Ascending aorta (tissue), 2 donors: ENCODE measurements at regions of chr1 and their contacts with region 1.

Region 1: GRCh38 chr1:35202048-35202719 is 9.2 kb upstream of the SFPQ start:
- DNase-seq: peak in 1 of 2 donors; percentile 80
- H3K4me3 ChIP-seq: peak overlapping the region in 1 of 2 donors; percentile 25
- H3K27ac ChIP-seq: no peak overlapping the region
- H3K4me1 ChIP-seq: no peaks in the 10 kb centered on the region
- H3K27me3 ChIP-seq: no peaks in the 10 kb centered on the region
- CTCF ChIP-seq: peak; percentile 60 to 84 (median 83)

Region 2: GRCh38 chr1:35298464-35298863 is 96.3 kb after region 1 on chr1:
- intact Hi-C with region 1: loop called (anchors 1 kb)
- DNase-seq: no peak
- H3K4me3 ChIP-seq: no peak overlapping the region
- H3K27ac ChIP-seq: no peak overlapping the region
- H3K4me1 ChIP-seq: peaks cover 0 to 9% of the 10 kb centered on the region in 2 donors
- H3K27me3 ChIP-seq: no peaks in the 10 kb centered on the region
- CTCF ChIP-seq: peak; percentile 14 to 31 (median 30)

Region 3: GRCh38 chr1:35369922-35370671 is 167.9 kb after region 1 on chr1:
- intact Hi-C with region 1: loop called (anchors 5 kb)
- DNase-seq: peak in 1 of 2 donors; percentile 78
- H3K4me3 ChIP-seq: no peak overlapping the region
- H3K27ac ChIP-seq: peak overlapping the region; percentile 50 to 68
- H3K4me1 ChIP-seq: no peaks in the 10 kb centered on the region
- H3K27me3 ChIP-seq: no peaks in the 10 kb centered on the region
- CTCF ChIP-seq: no peak

Region 4: GRCh38 chr1:35763201-35763600 is 561.0 kb after region 1 on chr1:
- intact Hi-C with region 1: no loop called
- DNase-seq: no peak
- H3K4me3 ChIP-seq: no peak overlapping the region
- H3K27ac ChIP-seq: no peak overlapping the region
- H3K4me1 ChIP-seq: no peaks in the 10 kb centered on the region
- H3K27me3 ChIP-seq: no peaks in the 10 kb centered on the region
- CTCF ChIP-seq: no peak